Sigmoid colon (tissue), 7 donors: ENCODE measurements at regions of chr2 and their contacts with region 1.

Region 1: GRCh38 chr2:109173311-109174171 is 44.5 kb downstream of the SH3RF3 start:
- DNase-seq: peak; percentile 91
- H3K4me3 ChIP-seq: no peak overlapping the region
- H3K27ac ChIP-seq: peak overlapping the region; percentile 83 to 92 (median 89)
- H3K4me1 ChIP-seq: peaks cover 0 to 85% (median 67%) of the 10 kb centered on the region in 4 donors
- H3K27me3 ChIP-seq: no peaks in the 10 kb centered on the region
- CTCF ChIP-seq: no peak
- EP300 ChIP-seq: peak in 1 of 4 donors; percentile 76
- POLR2A ChIP-seq: no peak

Region 2: DNA sequence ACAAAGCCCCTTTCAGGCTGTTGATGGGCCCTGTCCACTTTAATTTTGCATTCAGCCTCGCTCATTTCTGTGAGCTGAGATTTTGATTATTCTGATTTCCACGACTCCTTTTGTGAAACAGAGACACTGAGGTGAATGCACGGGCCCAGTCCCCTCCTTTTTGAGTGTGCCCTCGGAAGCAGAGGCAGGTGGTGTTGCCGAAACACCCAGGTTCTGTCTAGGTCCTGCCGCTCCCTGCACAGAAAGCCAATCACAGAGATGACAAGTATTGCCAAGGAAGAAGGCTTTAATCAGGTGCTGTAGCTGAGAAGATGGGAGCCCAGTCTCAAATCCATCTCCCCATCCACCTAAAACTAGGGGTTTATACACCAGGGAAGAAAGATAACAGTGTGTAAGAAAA is 140.4 kb before region 1 on chr2:
- intact Hi-C with region 1: no loop called
- DNase-seq: no peak
- H3K4me3 ChIP-seq: no peak overlapping the region
- H3K27ac ChIP-seq: no peak overlapping the region
- H3K4me1 ChIP-seq: peaks cover 0 to 12% (median 8%) of the 10 kb centered on the region in 4 donors
- H3K27me3 ChIP-seq: peaks cover 0 to 8% (median 4%) of the 10 kb centered on the region in 3 donors
- CTCF ChIP-seq: no peak
- EP300 ChIP-seq: no peak
- POLR2A ChIP-seq: no peak

Region 3: DNA sequence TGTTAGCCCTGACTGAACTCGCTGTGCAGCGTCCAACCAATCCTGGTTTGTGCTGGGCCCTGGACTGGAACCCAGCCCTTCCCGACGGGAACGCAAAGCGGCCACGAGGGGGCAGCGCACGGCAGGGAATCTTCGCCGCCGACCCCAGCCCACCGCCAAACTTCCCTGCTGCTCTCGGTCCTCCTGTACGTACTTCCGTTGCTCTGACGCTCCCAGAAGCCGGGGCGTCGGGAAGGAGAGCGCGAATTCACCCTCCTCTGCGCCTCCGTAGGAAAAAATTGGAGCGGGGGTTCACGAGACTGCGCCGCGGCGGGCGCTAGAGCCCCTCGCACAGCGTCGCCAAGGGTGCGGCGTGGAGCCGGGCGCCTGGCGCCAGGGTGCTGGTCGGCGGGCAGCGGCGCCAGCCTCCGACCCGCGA is 45.5 kb before region 1 on chr2:
- intact Hi-C with region 1: loop called (anchors 2 kb)
- DNase-seq: peak; percentile 92
- H3K4me3 ChIP-seq: peak overlapping the region; percentile 42 to 86 (median 74)
- H3K27ac ChIP-seq: peak overlapping the region; percentile 74 to 87 (median 84)
- H3K4me1 ChIP-seq: peaks cover 0 to 28% (median 21%) of the 10 kb centered on the region in 4 donors
- H3K27me3 ChIP-seq: no peaks in the 10 kb centered on the region
- CTCF ChIP-seq: peak; percentile 87 to 91 (median 88)
- EP300 ChIP-seq: no peak
- POLR2A ChIP-seq: peak in 1 of 2 donors; percentile 15

Region 4: DNA sequence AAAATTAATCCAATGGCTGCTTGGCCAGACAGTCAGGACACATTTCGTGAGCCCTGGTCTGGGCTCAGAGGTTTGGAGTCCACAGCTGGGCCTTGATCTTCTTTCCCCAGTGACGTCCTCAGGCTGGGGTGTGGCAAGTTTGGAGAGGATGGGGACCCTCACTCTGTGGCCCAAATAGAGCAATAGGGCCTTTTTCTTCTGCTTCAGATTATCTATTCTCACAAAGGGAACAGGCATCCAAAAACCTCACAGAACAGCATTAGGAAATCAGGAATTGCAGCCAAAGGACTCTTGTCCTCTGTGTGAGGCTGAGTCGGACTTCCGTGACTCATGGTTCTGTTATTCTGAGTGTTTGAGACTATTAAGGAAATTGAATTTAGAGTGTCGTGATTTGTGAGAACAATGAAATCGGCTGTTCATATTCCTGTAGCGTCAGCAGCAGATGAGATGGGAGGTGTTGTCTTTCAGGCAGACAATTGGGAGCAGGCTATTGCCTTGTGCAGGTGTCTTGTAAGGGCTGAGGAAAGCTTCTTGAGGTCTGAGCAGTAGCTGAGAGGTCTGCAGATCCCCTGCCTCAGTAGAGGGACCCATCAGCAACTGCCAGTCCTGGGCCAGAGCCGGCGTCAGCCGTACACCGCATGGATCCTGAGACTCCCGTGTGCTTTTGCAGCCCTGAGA is 69.3 kb after region 1 on chr2:
- intact Hi-C with region 1: loop called (anchors 2 kb)
- DNase-seq: peak; percentile 87
- H3K4me3 ChIP-seq: no peak overlapping the region
- H3K27ac ChIP-seq: peak overlapping the region; percentile 72 to 91 (median 86)
- H3K4me1 ChIP-seq: peaks cover 0 to 72% (median 63%) of the 10 kb centered on the region in 4 donors
- H3K27me3 ChIP-seq: no peaks in the 10 kb centered on the region
- CTCF ChIP-seq: no peak
- EP300 ChIP-seq: no peak
- POLR2A ChIP-seq: no peak

Region 5: DNA sequence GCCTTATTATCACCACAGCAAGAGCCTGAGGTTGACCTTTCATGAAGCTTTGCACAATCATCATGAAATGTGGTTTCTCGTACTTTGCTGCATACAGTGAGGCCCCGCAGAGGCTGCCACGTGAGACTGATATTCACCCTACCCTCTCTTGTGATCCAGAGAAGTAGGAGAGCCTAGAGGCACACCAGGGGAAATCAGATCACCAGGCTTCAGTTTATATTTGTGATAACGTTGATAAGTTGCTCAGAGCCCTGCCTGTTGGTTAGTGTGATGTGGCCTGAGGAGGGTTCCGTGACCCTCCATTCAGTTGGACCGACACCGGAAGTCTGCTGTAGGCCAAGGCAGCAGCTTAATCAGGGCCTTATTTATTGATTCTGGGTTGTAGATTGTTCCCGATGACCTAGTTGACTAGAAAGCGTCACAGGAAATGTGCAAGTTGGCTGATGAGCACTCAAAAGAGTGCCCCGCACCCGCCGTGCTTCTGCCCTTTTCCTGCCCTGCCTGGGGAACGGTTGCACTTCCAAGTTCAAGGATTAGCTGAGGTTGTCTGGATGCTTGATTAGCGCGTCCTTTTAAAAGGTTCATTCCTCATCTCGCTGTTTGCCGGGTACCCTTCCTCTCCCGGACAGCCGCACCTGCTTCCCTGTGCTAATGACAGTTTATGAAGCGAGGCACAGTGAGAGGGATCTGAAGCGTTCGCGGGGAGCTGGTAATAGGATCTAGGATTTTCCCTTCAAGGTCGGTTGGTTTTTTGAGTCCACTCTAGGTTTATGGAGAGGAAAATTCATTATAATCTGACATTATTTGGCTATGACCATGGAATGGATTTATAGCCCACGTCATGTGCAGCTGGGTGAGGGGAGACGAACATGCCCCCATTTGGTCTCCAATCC is 101.8 kb after region 1 on chr2:
- intact Hi-C with region 1: no loop called
- DNase-seq: no peak
- H3K4me3 ChIP-seq: no peak overlapping the region
- H3K27ac ChIP-seq: no peak overlapping the region
- H3K4me1 ChIP-seq: peaks cover 0 to 11% (median 4%) of the 10 kb centered on the region in 4 donors
- H3K27me3 ChIP-seq: no peaks in the 10 kb centered on the region
- CTCF ChIP-seq: no peak
- EP300 ChIP-seq: no peak
- POLR2A ChIP-seq: no peak

Region 6: DNA sequence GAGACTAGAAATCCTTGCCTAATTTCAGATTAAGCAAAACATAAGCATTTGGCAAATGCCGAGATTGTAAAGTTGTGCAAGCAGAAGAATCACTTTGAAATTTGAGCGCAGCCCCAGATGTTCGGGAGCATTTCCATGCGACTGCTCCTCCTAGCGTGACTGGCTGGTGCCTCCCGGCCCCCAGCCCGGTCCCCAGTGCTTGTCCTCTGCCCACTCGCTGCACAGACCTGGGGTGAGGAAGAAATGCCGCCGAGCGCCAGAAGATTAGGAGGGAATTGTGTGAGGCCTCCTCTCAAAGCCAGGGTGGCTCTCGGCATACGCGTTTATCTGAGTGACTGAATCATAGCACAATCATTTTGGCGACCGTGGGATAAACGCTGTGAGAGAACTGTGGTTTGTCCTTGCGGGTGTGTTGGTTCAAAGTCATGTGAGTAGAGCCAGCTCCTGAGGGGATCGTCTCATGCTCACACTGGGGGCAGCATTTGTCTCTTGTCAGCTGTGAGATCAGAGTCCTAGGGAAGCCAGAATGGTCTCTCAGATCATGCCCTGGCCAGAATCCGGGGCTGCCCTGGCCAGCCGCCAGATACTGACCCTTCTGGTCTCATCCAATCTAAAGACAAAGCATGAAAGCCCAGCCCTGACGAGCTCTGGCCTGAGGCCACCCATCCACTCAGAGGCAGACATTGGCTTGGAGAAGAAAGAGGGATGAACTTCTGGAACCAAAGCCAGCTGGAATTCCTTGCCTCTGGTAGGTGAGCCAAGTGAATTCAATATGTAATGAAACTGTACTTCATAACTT is 144.8 kb after region 1 on chr2:
- intact Hi-C with region 1: loop called (anchors 2 kb)
- DNase-seq: peak; percentile 95
- H3K4me3 ChIP-seq: peak overlapping the region in 2 of 4 donors; percentile 3 to 21
- H3K27ac ChIP-seq: peak overlapping the region; percentile 76 to 82 (median 82)
- H3K4me1 ChIP-seq: peaks cover 0 to 58% (median 52%) of the 10 kb centered on the region in 4 donors
- H3K27me3 ChIP-seq: no peaks in the 10 kb centered on the region
- CTCF ChIP-seq: no peak
- EP300 ChIP-seq: peak in 1 of 4 donors; percentile 14
- POLR2A ChIP-seq: no peak

Region 7: GRCh38 chr2:109510136-109511028 is 336.8 kb after region 1 on chr2:
- intact Hi-C with region 1: loop called (anchors 5 kb)
- DNase-seq: peak; percentile 89
- H3K4me3 ChIP-seq: no peak overlapping the region
- H3K27ac ChIP-seq: no peak overlapping the region
- H3K4me1 ChIP-seq: peaks cover 0 to 29% (median 23%) of the 10 kb centered on the region in 4 donors
- H3K27me3 ChIP-seq: no peaks in the 10 kb centered on the region
- CTCF ChIP-seq: peak; percentile 83 to 96 (median 90)
- EP300 ChIP-seq: no peak
- POLR2A ChIP-seq: no peak

Region 8: DNA sequence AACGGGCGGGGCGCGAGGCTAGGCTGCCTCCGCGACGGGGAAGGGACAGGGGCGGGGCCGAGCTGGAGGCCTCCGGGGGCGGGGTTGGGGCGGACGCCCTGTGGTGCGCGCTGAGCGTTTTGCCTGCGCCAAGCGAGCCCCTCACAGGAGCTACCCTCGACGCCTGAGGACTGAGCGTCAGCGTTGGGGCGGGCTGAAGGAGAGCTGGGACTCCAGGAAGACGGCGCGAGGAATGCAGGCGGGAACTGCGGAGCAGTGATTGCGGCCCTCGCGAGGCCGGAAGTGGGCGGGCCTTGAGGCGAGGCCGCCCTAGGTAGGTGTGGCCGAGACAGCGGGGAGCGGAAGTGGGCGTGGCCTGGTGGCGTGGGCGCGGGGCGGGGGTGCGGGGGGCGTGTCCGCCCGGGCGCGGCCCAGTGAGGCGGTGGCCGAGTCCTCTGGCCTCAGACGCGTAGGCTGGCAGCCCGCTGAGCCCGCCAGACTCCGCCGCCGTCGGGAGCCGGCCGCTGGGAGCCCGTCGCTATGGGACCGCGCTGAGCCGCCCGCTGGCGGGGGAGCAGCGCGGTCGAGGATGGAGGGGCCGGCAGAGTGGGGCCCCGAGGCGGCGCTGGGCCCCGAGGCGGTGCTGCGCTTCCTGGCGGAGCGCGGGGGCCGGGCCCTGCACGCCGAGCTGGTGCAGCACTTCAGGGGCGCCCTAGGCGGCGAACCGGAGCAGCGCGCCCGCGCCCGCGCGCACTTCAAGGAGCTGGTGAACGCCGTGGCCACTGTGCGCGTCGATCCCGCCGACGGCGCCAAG is 440.6 kb after region 1 on chr2 and contains the starts of genes SEPTIN10 and SOWAHC:
- intact Hi-C with region 1: loop called (anchors 5 kb)
- DNase-seq: peak; percentile 99
- H3K4me3 ChIP-seq: peak within 1 kb of the TSS; percentile 66 to 85 (median 70)
- H3K27ac ChIP-seq: peak within 1 kb of the TSS; percentile 93 to 100 (median 99)
- H3K4me1 ChIP-seq: peaks cover 0 to 63% (median 59%) of the 10 kb centered on the region in 4 donors
- H3K27me3 ChIP-seq: no peaks in the 10 kb centered on the region
- CTCF ChIP-seq: no peak
- EP300 ChIP-seq: peak in 1 of 4 donors; percentile 30
- POLR2A ChIP-seq: peak in 1 of 2 donors; percentile 59
- total RNA-seq, gene SEPTIN10: 122 to 178 (median 161) TPM
- total RNA-seq, gene SOWAHC: 19.4 to 29.3 (median 23.6) TPM

Region 9: GRCh38 chr2:109690822-109691547 is 517.4 kb after region 1 on chr2:
- intact Hi-C with region 1: loop called (anchors 10 kb)
- DNase-seq: peak; percentile 88
- H3K4me3 ChIP-seq: peak overlapping the region in 1 of 4 donors; percentile 2
- H3K27ac ChIP-seq: peak overlapping the region; percentile 82 to 92 (median 90)
- H3K4me1 ChIP-seq: peaks cover 0 to 95% (median 85%) of the 10 kb centered on the region in 4 donors
- H3K27me3 ChIP-seq: no peaks in the 10 kb centered on the region
- CTCF ChIP-seq: no peak
- EP300 ChIP-seq: peak; percentile 7 to 88 (median 63)
- POLR2A ChIP-seq: peak in 1 of 2 donors; percentile 15